ENCODE measurements at regions of chr19 and their contacts with region 1.

Region 1: DNA sequence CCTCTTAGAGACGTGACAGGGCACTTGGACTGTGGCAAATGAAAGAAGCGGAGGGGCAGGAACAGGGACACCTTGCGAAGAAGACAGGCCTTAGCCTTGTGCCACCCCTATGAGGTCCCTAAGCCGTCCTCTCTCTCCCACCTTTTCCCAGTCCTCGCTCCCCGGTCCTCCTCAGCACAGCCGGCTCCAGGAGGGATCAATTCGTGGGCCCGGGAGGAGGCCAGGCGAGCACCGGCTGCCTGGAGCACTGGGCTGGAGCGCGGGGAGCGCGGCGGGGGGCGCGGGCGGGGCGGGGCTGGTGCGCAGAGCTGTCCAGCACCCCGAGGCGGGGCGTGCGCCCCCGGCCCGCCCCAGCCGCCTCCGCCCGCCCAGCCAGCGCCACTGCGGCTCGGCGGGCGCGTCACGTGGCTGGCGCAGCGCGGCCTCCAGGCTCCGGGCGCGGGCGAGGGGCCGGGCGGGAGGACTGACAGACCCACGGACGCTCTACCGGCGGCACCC is at the start of gene LRP3:
- DNase-seq: no peak
- total RNA-seq, gene LRP3: 36.1 to 36.8 TPM

Region 2: DNA sequence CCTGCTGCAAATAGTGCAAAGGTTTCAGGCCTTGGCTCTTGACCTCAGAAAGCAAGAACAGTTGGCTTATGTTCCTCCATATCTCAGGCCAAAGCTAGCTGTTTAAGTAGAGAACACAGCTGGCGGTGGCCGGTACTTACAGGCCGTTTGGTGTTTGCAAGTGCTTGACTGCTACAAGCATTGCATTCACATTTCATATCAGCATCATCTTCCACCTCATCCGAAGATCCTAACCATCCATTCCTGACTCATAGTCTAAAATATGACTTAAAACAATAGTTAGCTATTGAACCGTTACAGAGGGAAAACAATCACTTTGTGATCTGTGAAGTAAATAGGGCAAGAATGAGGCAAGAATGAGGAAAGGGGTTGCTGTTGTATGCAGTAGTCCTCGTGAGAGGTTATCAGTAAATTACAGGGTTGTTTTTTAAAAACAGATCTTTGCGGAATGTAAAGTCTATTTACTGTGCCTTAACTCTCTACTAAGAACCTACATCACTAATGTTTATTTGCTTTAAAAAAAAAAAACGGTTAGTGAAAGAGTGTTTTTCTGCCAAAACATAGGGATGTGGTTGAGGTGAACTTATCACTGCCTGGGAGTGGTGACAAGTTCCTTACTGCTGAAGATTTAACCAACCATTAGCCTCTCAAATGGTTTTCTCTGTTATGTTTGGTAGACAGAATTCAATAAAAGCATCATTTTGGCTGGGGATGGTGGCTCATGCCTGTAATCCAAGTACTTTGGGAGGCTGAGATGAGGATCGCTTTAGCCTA is 83.6 kb before region 1 on chr19:
- intact Hi-C with region 1: no loop called
- DNase-seq: no peak

Region 3: DNA sequence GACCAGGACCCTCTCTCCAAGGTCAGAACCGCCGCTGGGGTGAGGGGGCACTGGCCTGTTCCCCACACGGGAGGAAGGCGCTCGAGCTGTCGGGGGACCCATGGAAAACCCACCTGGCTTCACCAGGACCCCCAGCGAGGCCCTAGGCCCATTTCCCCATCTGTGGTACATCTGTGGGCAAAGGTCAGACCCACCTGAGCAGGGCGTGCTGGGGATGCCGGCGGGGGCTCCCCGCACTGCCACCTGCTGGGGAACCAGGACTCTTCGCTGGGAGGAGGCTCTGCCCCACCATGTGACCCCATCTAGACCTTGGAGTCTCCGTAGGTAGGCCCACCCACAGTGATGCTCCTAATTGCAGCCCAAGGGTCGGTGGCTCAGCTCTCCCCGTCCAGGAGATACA is 61.5 kb before region 1 on chr19:
- intact Hi-C with region 1: loop called in 1 of 2 experiments (anchors 10 kb)
- DNase-seq: no peak

Region 4: DNA sequence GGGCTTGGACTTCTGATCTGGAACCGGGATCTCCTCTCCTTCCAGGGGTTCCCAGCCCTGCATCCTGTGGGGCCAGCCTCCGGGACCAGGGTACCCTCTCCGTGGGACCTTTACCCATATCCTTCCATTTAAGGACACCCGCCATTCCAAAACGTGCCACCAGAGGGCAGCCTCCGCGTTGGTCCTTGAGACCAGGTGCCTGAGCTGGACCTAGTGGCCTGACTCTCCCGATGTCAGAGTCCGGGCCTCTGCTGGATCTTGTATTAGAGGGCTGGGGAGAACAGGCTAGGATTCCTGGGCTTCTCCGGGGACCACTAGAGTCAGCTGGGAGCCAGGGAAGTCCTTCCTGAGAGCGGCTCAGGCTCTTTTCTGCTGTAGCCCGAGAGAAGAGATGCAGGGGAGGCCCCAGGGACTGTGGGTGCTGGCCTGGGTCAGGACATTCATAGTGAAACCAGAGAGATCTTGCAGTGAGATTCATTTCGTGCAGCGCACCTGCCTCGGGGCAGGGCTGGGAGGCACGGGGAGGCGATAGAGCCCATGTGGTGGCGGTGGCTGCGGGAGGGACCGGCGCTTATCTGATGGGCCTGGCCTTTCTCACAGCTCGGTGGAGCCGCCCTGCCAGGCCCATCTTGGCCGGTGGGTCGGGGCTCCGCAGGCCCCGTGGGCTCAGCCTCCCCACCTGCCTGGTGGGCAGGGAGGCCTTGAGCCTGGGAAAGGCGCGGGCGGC is 41.5 kb after region 1 on chr19:
- intact Hi-C with region 1: no loop called
- DNase-seq: peak; percentile 94

Measured in posterior vena cava (tissue), 2 donors.